ENCODE measurements at regions of chr5 and their contacts with region 1.

Region 1: DNA sequence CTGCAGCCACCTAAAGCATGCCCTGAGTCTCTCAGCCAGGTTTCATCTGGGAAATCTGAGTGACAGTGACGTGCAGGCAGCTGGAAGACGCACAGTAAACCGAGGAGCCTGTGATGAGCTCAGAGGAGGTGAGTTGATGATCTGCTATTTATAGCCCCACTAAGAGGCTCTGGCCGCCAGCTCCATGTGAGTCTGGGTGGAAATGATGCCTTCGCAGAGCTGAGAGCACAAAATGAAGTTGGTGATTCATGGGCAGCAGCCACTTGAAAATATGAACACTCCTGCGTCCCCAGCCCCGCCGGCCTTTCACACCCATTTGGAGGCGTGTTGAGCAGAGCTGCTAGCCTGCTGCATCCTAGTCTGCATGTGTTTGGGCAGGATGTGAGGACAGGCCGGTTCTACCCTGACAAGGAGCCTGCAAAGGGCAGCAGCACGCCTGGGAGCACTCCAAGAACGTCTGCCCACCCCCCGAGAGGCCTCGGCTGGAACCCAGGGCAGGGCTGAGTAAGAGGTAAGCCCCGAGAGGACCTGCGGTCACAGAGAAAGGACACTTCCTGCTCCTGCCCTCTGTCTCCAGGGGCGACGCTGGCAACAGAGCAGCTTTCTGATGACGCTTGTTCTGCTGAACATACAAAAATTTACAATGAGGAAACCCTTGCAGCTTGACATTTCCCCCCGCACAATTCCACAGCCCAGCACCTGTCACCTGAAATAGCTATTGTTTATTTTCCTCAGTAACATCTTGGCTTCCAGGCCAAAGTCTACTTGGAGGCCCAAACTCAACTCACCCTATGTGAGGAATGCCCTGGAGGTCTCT is 25.1 kb upstream of the CDKN2AIPNL start:
- DNase-seq: peak; percentile 84
- H3K4me3 Mint-ChIP-seq: peak overlapping the region; percentile 9
- H3K27ac Mint-ChIP-seq: peak overlapping the region; percentile 77
- H3K4me1 Mint-ChIP-seq: peaks cover 33% of the 10 kb centered on the region
- H3K27me3 Mint-ChIP-seq: no peaks in the 10 kb centered on the region

Region 2: DNA sequence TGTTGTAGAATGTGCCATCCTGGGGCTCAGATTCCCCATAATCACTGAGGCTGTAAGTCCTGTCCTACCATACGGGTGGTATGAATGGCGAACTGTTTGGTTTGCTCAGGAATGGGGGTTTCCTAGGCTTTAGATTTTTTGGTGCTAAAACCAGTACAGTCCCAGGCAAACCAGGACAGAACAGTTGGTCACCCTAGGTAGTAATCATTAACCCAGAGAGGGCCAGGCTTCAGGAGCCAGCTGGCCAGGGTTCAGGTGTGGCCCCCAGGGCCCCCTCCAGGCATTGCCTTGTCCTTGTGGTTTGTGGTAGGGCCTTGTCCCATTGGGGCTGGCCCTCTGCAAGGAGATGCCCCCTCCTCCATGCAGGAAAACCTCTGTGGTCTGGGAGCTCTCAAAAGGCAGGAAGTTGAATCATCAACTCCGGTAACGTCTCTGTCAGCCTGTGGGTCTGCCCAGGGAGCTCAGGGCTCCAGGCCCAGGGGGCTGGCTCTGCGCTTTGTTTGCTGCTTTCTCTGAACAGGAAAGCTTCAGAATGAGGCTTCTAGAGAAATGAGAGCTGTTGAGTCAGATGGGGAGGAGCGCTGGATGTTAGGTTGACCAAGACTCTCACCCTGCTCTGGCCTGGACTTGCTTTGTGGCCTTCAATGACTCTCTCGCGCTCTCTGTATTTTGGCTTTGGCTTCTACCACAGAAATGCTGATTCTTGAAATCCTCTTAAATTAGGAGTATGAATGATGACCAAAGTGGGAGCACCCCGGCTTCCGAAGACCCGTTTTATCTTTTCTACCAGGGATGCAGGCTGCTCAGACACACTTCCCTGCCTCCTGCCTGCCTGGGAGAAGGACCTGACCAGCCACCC is 66.6 kb after region 1 on chr5:
- CTCF ChIA-PET with region 1: no interaction called
- POLR2A ChIA-PET with region 1: interaction called, 7 read pairs
- intact Hi-C with region 1: loop called (anchors 2 kb)
- DNase-seq: peak; percentile 92
- H3K4me3 Mint-ChIP-seq: peak overlapping the region; percentile 58
- H3K27ac Mint-ChIP-seq: peak overlapping the region; percentile 97
- H3K4me1 Mint-ChIP-seq: peaks cover 31% of the 10 kb centered on the region
- H3K27me3 Mint-ChIP-seq: no peaks in the 10 kb centered on the region

Region 3: DNA sequence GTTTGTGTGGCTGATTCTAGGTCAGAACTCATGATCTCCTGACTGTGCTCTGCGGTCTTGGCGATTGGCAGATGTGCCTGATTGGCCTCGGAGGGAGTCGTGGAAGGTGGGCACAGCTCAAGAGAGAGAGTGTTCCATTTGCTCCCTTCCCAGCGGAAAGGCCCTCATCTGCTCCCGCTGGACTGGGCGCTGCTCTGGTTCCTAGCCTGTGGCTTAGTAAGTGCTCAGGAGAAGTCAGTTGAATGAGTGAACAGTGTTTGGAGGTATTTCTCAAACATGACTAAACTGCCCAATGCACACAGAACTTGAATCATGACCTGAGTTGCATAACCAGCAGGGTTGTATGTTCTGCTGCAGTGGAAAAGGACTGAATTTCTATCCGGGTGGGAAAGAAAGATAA is 717.5 kb after region 1 on chr5:
- CTCF ChIA-PET with region 1: no interaction called
- POLR2A ChIA-PET with region 1: no interaction called
- intact Hi-C with region 1: no loop called
- DNase-seq: no peak
- H3K4me3 Mint-ChIP-seq: no peak overlapping the region
- H3K27ac Mint-ChIP-seq: no peak overlapping the region
- H3K4me1 Mint-ChIP-seq: no peaks in the 10 kb centered on the region
- H3K27me3 Mint-ChIP-seq: peaks cover 1% of the 10 kb centered on the region